Sigmoid colon (tissue), 7 donors: ENCODE measurements at regions of chr1 and their contacts with region 1.

Region 1: GRCh38 chr1:9004700-9005394 is 21.4 kb downstream of the SLC2A7 start:
- DNase-seq: peak; percentile 85
- H3K4me3 ChIP-seq: no peak overlapping the region
- H3K27ac ChIP-seq: no peak overlapping the region
- H3K4me1 ChIP-seq: peaks cover 0 to 6% (median 0%) of the 10 kb centered on the region in 4 donors
- H3K27me3 ChIP-seq: no peaks in the 10 kb centered on the region
- CTCF ChIP-seq: peak; percentile 78 to 92 (median 84)
- EP300 ChIP-seq: no peak
- POLR2A ChIP-seq: no peak

Region 2: DNA sequence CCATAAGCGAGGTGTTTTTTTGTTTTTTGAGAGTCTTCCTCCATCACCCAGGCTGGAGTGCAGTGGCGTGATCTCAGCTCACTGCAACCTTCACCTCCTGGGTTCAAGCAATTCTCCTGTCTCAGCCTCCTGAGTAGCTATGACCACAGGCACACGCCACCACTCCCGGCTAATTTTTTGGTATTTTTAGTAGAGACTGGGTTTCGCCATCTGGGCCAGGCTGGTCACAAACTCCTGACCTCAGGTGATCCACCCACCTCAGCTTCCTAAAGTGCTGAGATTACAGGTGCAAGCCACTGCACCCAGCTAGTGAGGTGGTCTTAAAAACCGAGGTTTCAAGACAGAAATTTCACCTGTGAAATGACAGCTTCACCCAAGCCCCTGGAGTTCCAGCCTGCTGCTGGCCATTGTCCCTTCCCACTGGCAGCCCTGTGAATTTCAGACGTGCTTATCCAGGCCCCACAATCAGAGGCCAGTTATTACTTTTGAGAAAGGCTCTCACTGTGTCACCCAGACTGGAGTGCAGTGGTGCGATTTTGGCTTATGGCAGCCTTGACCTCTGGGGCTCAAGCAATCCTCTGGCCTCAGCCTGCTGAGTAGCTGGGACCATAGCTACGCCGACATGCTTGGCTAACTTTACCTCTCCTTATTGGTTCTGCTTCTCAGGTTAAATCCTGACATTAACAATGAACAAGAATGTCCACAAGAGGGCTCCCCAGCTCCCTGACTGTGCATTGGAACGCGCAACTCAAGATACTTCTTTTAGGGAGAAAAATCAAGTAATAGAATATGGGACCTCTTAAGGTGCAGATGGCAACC is 145.8 kb before region 1 on chr1:
- intact Hi-C with region 1: loop called (anchors 5 kb)
- DNase-seq: no peak
- H3K4me3 ChIP-seq: no peak overlapping the region
- H3K27ac ChIP-seq: peak overlapping the region; percentile 41 to 67 (median 54)
- H3K4me1 ChIP-seq: peaks cover 0 to 28% (median 15%) of the 10 kb centered on the region in 4 donors
- H3K27me3 ChIP-seq: no peaks in the 10 kb centered on the region
- CTCF ChIP-seq: peak; percentile 57 to 66 (median 61)
- EP300 ChIP-seq: no peak
- POLR2A ChIP-seq: no peak

Region 3: DNA sequence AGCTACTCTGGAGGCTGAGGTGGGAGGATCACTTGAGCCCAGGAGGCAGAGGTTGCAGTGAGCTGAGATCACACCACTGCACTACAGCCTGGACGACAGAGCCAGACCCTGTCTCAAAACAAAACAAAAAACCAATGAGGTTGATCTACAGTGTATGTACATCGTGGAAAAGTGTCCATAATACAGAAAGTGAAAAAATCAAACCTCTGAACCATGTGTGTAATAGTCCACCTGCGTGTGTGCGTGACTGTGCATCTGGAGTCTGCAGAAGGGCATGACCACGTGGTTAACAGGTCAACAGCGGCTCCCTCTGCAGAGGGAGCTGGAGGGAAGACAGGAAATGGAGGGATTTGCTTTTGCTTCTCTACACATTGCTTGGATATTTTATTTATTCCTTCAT is 93.9 kb before region 1 on chr1:
- intact Hi-C with region 1: loop called (anchors 5 kb)
- DNase-seq: no peak
- H3K4me3 ChIP-seq: no peak overlapping the region
- H3K27ac ChIP-seq: no peak overlapping the region
- H3K4me1 ChIP-seq: no peaks in the 10 kb centered on the region
- H3K27me3 ChIP-seq: no peaks in the 10 kb centered on the region
- CTCF ChIP-seq: no peak
- EP300 ChIP-seq: no peak
- POLR2A ChIP-seq: no peak

Region 4: DNA sequence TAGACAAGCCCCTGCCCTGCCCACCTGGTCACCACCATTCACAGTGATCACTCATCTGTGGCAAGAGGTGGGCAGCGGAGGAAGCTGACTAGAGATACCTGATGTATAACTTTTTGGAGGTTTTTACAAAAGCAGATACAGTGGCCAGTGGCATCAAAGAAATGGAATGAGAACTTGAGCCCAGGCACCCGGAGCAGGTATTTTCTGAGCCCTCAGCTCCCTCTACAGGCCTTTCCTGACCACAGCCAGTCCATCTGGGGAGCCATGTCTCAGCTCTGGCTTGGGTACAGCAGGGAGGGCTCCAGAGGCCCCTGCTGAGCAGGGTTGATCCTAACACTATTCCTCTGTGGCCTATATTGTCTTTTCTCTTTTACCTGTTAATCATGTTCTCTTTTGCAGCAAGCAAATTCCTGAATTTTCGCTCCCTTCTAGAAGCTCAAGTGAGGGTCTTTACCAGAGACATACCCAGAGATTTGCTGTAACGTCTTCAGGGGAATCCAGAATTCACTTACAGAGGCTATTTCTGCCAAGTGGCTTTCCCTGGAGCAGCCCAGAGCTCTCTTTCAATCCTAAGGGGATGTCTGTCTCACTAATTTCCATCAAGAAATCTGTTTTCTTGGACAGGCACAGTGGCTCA is 96.8 kb after region 1 on chr1:
- intact Hi-C with region 1: loop called (anchors 1 kb)
- DNase-seq: peak; percentile 67
- H3K4me3 ChIP-seq: no peak overlapping the region
- H3K27ac ChIP-seq: no peak overlapping the region
- H3K4me1 ChIP-seq: no peaks in the 10 kb centered on the region
- H3K27me3 ChIP-seq: no peaks in the 10 kb centered on the region
- CTCF ChIP-seq: peak; percentile 28 to 65 (median 44)
- EP300 ChIP-seq: no peak
- POLR2A ChIP-seq: no peak